ENCODE measurements at regions of chr11 and their contacts with region 1.

Region 1: DNA sequence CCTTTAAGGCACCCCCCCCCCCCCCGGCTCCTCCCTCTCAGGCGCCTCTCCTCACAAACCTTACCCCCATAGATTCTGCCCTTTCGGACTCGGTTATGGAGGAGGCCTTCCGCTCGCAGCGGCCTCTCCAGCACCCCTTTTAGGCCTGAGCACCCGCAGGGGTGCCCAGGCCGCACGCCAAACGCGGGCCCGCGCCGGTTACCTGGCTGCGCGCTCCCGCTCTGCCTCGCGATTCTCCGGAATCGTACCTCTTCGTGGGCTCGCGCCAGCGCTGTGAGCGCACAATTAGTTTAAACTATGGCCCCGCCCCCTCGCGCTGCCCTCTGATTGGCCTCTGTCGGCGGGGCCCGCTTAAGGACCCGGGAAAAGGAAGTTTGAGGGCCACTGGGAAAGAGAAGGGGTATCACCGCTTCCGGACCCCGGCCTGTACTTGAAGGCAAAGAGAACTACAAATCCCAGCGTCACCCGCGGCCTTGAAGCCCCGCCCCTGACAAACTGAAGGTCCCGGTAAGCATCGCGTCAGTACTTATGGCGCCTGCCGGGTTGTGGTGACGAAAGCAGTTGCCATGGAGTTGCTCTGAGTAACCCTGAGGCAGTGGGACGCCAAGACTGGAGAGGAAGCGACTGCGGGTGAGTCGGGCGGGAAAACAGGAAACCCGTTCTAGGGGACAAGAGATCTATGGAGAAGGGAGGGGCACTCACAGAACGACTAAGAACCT is at the starts of genes LRRC51 and NUMA1:
- DNase-seq: peak; percentile 100
- H3K4me3 Mint-ChIP-seq: peak within 1 kb of the TSS; percentile 92
- H3K27ac Mint-ChIP-seq: peak within 1 kb of the TSS; percentile 96
- H3K4me1 Mint-ChIP-seq: peaks cover 31% of the 10 kb centered on the region
- H3K27me3 Mint-ChIP-seq: no peaks in the 10 kb centered on the region
- total RNA-seq, gene LRRC51: 8.3 to 8.5 TPM
- total RNA-seq, gene NUMA1: 149 to 158 TPM

Region 2: GRCh38 chr11:71928737-71929452 is 151.5 kb before region 1 on chr11 and contains the start of gene RNF121:
- CTCF ChIA-PET with region 1: no interaction called
- POLR2A ChIA-PET with region 1: no interaction called
- intact Hi-C with region 1: loop called (anchors 1 kb)
- DNase-seq: peak; percentile 99
- H3K4me3 Mint-ChIP-seq: peak within 1 kb of the TSS; percentile 86
- H3K27ac Mint-ChIP-seq: peak within 1 kb of the TSS; percentile 97
- H3K4me1 Mint-ChIP-seq: peaks cover 44% of the 10 kb centered on the region
- H3K27me3 Mint-ChIP-seq: no peaks in the 10 kb centered on the region
- total RNA-seq, gene RNF121: 34.9 to 37.1 TPM

Region 3: DNA sequence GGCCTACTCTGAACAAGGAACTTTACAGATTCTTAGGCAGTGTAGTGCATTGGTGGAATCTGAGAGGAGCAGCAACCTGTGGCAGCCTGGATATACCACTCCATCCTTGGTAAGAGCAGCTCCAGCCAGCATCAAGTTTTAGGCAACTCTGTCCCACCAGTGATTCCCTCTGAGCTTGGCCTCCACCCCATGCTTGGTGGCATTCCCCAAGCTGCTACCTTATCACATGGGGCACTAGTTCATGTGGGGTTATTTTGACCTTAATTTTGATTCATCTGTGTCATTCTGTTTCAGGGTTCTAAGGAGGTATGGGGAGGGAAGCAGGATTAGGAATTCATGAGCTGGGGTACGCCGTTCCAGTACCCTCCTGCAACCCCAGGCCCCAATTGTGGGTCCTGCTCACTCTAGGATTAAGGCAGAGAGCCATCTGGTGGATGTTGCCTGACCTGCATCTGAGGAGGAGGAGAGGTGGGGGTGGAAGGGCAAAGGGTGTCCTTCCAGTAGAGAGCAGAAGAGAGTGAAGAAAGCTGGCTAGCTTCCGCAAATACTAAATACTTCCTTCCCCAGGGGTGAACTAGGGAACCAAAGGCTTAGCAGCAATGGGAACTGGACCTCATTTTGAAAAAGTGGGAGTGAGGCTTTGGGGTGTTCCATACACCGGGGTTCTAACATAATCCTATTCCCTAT is 10.7 kb after region 1 on chr11:
- CTCF ChIA-PET with region 1: interaction called, 19 read pairs
- POLR2A ChIA-PET with region 1: interaction called, 7 read pairs
- intact Hi-C with region 1: no loop called
- DNase-seq: peak; percentile 76
- H3K4me3 Mint-ChIP-seq: no peak overlapping the region
- H3K27ac Mint-ChIP-seq: no peak overlapping the region
- H3K4me1 Mint-ChIP-seq: peaks cover 11% of the 10 kb centered on the region
- H3K27me3 Mint-ChIP-seq: no peaks in the 10 kb centered on the region

Region 4: DNA sequence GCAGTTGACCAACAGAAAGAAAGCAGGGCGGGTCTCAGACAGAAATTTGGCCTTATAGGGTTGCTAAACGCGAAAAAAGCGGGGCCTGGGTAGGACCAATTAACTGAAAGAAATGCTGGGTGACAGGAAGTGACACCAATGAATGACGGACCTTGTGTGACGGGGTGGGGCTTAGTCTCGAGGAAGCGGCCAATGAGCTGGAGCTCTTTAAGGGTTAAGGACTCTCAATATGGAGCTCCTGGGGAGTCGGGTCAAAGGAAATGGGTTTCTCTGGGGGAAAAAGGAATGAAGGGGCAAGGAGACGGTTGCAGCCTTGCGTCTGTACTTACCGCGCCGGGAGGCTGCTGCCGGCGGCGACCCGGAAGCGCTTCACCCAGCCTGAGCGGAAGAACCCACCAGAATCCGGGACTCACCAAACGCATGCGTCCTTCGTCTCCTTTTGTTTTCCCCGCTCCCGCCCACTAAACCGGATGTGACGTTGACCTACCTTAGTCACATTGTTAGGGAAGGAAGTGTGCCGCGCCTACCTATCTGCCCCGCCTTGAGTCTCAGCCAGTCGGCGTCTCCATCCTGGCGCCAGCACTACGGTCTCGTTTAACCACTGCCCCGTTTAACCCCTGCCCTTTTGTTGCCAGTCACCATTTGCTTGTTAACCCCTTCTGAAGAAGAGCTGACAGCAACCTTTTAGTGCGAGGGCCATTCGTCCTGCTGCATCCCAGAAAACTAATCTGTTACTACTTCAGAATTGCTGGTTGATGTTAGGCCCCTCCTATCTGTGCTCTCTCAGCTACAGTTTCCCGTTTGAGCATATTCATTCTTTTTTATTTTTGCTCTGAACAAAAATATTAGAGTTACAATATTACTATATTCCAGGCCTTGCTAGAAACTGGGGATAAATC is 32.2 kb after region 1 on chr11 and contains the start of gene ANAPC15:
- CTCF ChIA-PET with region 1: no interaction called
- POLR2A ChIA-PET with region 1: interaction called, 3 read pairs
- intact Hi-C with region 1: loop called (anchors 1 kb)
- DNase-seq: peak; percentile 100
- H3K4me3 Mint-ChIP-seq: peak within 1 kb of the TSS; percentile 93
- H3K27ac Mint-ChIP-seq: peak within 1 kb of the TSS; percentile 100
- H3K4me1 Mint-ChIP-seq: peaks cover 18% of the 10 kb centered on the region
- H3K27me3 Mint-ChIP-seq: no peaks in the 10 kb centered on the region
- total RNA-seq, gene ANAPC15: 62.6 to 64.2 TPM

Region 5: DNA sequence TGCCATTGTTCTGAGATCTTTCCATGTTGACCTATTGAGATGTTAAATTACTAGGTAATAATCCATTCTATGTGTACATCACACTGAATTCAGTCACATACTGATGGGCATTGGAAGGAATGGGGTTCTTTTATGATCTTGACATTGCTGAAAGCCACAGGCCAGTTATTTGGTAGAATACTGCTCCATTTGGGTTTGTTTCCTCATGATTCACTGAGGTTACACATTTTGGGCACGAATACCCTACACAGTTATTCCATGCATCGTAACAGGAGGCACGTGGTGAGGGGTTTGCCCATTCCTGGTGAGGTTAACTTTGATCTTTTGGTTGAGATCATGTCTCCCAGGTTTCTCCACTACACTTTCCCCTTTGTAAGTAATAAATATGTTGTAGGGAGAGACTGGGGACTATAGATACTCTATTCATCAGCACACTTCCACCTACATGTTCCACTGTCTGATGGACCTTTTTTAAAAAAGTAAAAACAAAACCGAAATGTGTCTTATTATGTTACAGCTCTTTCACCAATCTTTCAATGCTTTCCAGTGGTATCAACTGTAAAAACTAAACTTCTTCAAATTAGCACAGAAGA is 99.5 kb after region 1 on chr11:
- CTCF ChIA-PET with region 1: no interaction called
- POLR2A ChIA-PET with region 1: no interaction called
- intact Hi-C with region 1: no loop called
- DNase-seq: peak; percentile 22
- H3K4me3 Mint-ChIP-seq: no peak overlapping the region
- H3K27ac Mint-ChIP-seq: no peak overlapping the region
- H3K4me1 Mint-ChIP-seq: peaks cover 14% of the 10 kb centered on the region
- H3K27me3 Mint-ChIP-seq: peaks cover 6% of the 10 kb centered on the region